MCF 10A (cell line): ENCODE measurements at regions of chr19 and their contacts with region 1.

Region 1: DNA sequence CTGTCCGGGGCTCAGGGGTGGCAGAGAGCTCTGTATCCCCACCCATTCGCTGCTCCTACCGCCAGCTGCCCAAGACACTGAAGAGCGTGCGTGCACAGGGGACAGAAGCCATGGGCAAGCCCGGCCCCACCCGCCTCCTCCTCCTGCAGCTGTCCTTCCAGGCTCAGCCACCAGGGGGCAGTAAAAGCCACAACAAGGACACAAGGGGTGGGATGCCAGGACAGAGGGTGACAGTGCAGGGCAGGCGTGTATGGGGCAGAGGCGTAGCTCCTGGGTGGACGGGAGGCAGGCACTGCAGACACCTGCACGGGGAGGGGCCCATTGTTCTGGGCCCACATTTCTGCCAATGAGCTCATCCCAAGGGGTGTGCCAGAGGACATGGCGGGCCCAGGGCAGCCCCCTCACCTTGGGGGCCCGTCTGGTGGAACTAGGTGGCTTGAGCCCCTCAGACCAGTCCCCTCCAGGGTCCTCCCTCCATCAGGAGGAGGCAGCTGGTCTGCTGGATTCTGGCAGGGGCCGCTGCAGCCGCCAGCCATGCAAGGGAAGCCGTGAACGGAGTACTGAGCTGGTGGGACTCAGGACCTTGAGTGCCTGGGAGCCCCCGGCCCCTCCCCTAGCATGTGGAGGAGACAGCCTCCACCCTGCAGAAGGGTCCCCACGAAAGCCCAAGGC is 61.1 kb downstream of the MLLT1 start:
- DNase-seq: peak; percentile 91
- H3K4me3 Mint-ChIP-seq: no peak overlapping the region
- H3K27ac Mint-ChIP-seq: no peak overlapping the region
- H3K4me1 Mint-ChIP-seq: peaks cover 6% of the 10 kb centered on the region
- H3K27me3 Mint-ChIP-seq: no peaks in the 10 kb centered on the region
- CTCF ChIP-seq: peak; percentile 97

Region 2: DNA sequence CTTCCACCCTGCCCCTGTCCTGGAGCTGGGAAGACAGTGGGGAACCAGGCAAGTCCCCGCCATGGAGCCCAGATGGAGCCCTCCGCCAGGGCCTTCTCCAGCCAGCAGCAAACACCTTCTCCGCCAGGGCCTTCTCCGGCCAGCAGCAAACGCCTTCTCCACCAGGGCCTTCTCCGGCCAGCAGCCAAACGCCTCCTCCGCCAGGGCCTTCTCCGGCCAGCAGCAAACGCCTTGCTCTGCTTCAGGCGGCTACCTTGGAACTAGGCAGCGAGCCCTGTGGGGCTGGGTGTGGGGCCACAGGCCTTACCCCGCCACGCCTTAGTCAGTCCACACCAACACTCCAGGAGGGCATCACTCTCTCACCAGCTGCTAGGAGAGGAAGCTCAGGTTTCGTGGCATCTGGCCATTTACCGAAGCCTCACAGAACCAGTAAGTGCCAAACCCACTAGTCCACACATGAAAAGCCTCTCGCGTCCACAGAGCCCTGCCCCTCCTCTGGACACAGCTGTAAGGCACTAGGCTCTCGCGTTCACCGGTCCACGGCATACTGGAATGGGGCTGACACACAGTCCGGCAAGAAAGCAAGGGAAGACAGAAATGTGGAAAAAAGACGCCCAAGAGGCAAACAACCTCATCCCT is 20.1 kb after region 1 on chr19:
- CTCF ChIA-PET with region 1: interaction called, 22 read pairs
- POLR2A ChIA-PET with region 1: interaction called, 3 read pairs
- intact Hi-C with region 1: no loop called
- DNase-seq: peak; percentile 79
- H3K4me3 Mint-ChIP-seq: peak overlapping the region; percentile 56
- H3K27ac Mint-ChIP-seq: peak overlapping the region; percentile 3
- H3K4me1 Mint-ChIP-seq: peaks cover 34% of the 10 kb centered on the region
- H3K27me3 Mint-ChIP-seq: no peaks in the 10 kb centered on the region
- CTCF ChIP-seq: no peak

Region 3: DNA sequence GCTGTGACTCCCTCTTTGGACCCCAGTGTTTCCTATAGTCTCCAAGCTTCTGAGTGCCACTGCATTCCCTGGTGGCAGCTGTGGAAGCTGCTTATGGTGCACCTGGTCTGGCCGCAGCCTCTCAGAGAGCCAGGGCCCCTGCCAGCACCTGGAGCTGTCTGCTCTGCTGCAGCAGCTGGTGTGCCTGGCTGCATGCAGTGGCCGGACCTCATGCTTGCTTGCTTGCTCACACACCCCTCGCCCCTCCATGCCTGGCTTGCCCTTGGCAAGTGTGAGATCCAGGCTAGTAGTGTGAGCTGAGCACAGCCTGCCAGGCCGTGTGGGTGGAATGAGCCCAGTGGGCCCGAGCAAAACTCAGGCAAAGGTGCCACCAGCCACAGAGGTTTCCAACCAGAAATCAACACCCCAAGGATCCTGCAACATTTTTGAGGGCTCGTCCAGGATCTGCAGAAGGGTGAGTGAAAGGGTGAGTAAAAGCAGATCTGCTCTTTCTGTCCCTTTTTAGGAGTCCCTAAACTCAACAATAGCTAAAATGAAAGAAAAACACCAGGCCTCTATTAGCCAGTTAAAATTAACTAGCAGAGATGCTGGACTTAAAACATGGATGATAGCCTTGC is 68.8 kb after region 1 on chr19:
- CTCF ChIA-PET with region 1: interaction called, 10 read pairs
- POLR2A ChIA-PET with region 1: no interaction called
- intact Hi-C with region 1: no loop called
- DNase-seq: no peak
- H3K4me3 Mint-ChIP-seq: no peak overlapping the region
- H3K27ac Mint-ChIP-seq: no peak overlapping the region
- H3K4me1 Mint-ChIP-seq: no peaks in the 10 kb centered on the region
- H3K27me3 Mint-ChIP-seq: no peaks in the 10 kb centered on the region
- CTCF ChIP-seq: no peak

Region 4: GRCh38 chr19:6297202-6297601 is 78.6 kb after region 1 on chr19:
- CTCF ChIA-PET with region 1: interaction called, 26 read pairs
- POLR2A ChIA-PET with region 1: interaction called, 4 read pairs
- intact Hi-C with region 1: no loop called
- DNase-seq: no peak
- H3K4me3 Mint-ChIP-seq: no peak overlapping the region
- H3K27ac Mint-ChIP-seq: no peak overlapping the region
- H3K4me1 Mint-ChIP-seq: no peaks in the 10 kb centered on the region
- H3K27me3 Mint-ChIP-seq: no peaks in the 10 kb centered on the region
- CTCF ChIP-seq: no peak

Region 5: DNA sequence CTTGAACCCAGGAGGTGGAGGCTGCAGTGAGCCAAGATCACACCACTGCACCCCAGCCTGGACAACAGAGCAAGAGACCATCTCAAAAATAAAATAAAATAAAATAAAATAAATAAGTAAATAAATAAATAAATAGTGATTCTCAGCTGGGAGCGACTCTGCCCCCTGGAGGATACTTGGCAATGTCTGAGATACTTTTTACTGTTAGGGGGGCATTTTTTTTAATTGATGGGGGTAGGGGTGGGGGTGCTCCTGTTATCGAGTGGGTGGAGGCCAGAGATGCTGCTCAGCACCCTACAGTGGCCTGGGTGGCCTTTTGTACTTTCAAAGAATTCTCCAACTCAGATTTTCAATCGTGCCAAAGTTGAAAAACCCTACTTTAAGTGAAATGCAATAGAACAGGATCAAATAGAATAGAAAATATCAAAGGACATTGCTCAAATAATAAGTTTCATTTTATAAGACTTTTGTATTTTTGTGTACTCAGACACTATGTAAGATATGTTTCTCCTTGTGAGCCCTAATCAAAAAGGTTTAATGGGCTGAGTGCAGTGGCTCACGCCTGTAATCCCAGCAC is 135.6 kb after region 1 on chr19:
- CTCF ChIA-PET with region 1: interaction called, 26 read pairs
- POLR2A ChIA-PET with region 1: no interaction called
- intact Hi-C with region 1: no loop called
- DNase-seq: no peak
- H3K4me3 Mint-ChIP-seq: no peak overlapping the region
- H3K27ac Mint-ChIP-seq: no peak overlapping the region
- H3K4me1 Mint-ChIP-seq: peaks cover 11% of the 10 kb centered on the region
- H3K27me3 Mint-ChIP-seq: no peaks in the 10 kb centered on the region
- CTCF ChIP-seq: peak; percentile 46

Region 6: DNA sequence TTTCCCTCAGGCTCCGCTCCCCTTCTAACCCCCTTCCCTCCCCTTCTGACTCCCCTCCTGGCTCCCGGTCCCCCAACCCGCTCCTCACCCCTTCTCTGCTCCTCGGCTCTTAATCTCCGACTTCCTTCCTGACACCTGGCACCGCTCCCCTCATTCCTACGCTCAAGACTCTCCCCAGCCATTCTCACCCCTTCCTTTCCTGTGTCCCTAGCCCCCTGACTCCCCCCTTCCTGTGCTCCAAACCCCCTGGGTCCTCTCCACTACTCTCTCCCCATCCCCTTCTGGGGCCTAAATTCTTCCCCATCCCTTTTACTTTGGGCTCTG is 143.4 kb after region 1 on chr19:
- CTCF ChIA-PET with region 1: interaction called, 14 read pairs
- POLR2A ChIA-PET with region 1: no interaction called
- intact Hi-C with region 1: no loop called
- DNase-seq: no peak
- H3K4me3 Mint-ChIP-seq: peak overlapping the region; percentile 92
- H3K27ac Mint-ChIP-seq: peak overlapping the region; percentile 74
- H3K4me1 Mint-ChIP-seq: peaks cover 16% of the 10 kb centered on the region
- H3K27me3 Mint-ChIP-seq: no peaks in the 10 kb centered on the region
- CTCF ChIP-seq: no peak